ENCODE measurements at regions of chr22 and their contacts with region 1.

Region 1: GRCh38 chr22:37862570-37863325 is 13.5 kb downstream of the EIF3L start:
- DNase-seq: peak; percentile 20
- ATAC-seq: no peak
- H3K4me3 ChIP-seq: no peak overlapping the region
- H3K27ac ChIP-seq: peak overlapping the region; percentile 88
- H3K4me1 ChIP-seq: peaks cover 57% of the 10 kb centered on the region
- H3K27me3 ChIP-seq: no peaks in the 10 kb centered on the region
- CTCF ChIP-seq: no peak
- EP300 ChIP-seq: no peak
- POLR2A ChIP-seq: no peak
- RAD21 ChIP-seq: no peak

Region 2: GRCh38 chr22:37745548-37746365 is 117.0 kb before region 1 on chr22:
- CTCF ChIA-PET with region 1: no interaction called
- POLR2A ChIA-PET with region 1: no interaction called
- in situ Hi-C with region 1: no loop called
- intact Hi-C with region 1: loop called (anchors 10 kb)
- DNase-seq: peak; percentile 80
- ATAC-seq: peak; percentile 75
- H3K4me3 ChIP-seq: peak overlapping the region; percentile 82 to 98 (median 84)
- H3K27ac ChIP-seq: peak overlapping the region; percentile 67
- H3K4me1 ChIP-seq: peaks cover 65% of the 10 kb centered on the region
- H3K27me3 ChIP-seq: no peaks in the 10 kb centered on the region
- CTCF ChIP-seq: no peak
- EP300 ChIP-seq: no peak
- POLR2A ChIP-seq: no peak; a peak in 2 of 4 replicates
- RAD21 ChIP-seq: no peak

Region 3: DNA sequence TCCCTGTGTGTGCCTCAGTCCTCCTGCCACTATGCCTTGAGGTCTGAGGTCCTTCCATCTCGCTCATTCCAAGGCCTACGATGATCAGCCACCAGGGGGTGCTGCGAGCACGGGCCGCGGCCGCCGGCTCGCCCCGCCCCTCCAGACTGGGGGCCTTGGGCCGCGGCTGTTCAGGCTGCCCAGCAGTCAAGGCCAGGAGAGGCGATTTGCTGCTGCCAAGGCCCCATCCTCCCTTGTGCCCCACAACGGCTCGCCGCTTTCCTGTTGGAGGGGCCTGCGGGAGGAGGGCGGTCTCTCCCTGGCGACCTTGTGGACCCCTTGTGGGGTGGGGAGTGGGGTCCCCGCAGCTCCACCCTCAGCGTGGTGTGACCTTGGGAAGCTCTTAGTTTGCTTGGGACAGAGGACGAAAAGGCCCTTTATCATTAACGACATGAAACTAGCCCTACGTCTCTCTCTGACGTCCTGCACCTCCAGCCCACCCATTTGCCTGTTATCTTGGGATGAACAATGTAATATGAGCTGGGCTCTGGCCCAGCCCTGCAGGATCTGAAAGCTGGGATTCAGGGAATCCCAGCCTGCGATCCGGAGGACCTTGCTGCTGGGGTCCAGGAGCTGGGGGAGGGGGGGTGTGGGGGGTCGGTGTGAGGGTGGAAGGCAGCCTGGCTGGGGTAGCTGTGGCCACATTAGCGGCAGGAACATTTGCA is 44.9 kb before region 1 on chr22:
- CTCF ChIA-PET with region 1: interaction called, 23 read pairs
- POLR2A ChIA-PET with region 1: interaction called, 53 read pairs
- in situ Hi-C with region 1: loop called (anchors 5 kb)
- intact Hi-C with region 1: loop called (anchors 1 kb)
- DNase-seq: peak; percentile 86
- ATAC-seq: peak; percentile 70
- H3K4me3 ChIP-seq: peak overlapping the region; percentile 29 to 63 (median 35); a peak in 4 of 6 replicates
- H3K27ac ChIP-seq: peak overlapping the region; percentile 72
- H3K4me1 ChIP-seq: peaks cover 50% of the 10 kb centered on the region
- H3K27me3 ChIP-seq: no peaks in the 10 kb centered on the region
- CTCF ChIP-seq: peak; percentile 100
- EP300 ChIP-seq: peak in 1 of 2 experiments; percentile 23; a peak in 1 of 4 replicates
- POLR2A ChIP-seq: peak in 1 of 2 experiments; percentile 63; a peak in 1 of 4 replicates
- RAD21 ChIP-seq: peak; percentile 98

Region 4: GRCh38 chr22:37843741-37843990 is 19.1 kb before region 1 on chr22:
- CTCF ChIA-PET with region 1: no interaction called
- POLR2A ChIA-PET with region 1: interaction called, 35 read pairs
- in situ Hi-C with region 1: no loop called
- intact Hi-C with region 1: no loop called
- DNase-seq: no peak
- ATAC-seq: peak; percentile 62
- H3K4me3 ChIP-seq: peak overlapping the region; percentile 84 to 91 (median 87)
- H3K27ac ChIP-seq: peak overlapping the region; percentile 85
- H3K4me1 ChIP-seq: peaks cover 41% of the 10 kb centered on the region
- H3K27me3 ChIP-seq: no peaks in the 10 kb centered on the region
- CTCF ChIP-seq: no peak
- EP300 ChIP-seq: no peak
- POLR2A ChIP-seq: no peak; a peak in 1 of 4 replicates
- RAD21 ChIP-seq: no peak

Region 5: DNA sequence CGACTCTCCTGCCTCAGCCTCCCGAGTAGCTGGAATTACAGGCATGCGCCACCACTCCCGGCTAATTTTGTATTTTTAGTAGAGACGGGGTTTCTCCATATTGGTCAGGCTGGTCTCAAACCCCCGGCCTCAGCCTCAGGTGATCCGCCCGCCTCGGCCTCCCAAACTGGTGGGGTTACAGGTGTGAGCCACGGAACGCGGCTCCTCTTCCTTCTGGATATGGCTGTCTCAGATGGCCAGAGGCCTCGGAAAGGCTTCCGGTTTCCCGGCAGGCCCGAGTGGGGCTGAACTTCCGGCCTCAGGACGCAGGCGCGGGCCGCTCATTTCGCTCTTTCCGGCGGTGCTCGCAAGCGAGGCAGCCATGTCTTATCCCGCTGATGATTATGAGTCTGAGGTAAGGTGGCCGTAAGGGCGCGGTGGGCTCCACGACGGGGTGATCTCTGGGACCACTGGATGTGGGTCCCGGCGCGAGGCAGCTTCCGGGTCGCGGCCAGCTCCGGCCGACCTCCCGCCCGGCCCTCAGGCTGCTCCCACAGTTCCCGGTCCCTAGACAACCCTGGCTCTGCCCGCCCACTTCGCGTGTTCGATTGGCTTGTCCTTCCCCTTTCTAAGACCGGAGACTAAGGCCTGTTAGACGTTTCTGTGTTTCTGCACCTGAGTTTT is 13.5 kb before region 1 on chr22 and contains the start of gene EIF3L:
- CTCF ChIA-PET with region 1: no interaction called
- POLR2A ChIA-PET with region 1: interaction called, 35 read pairs
- in situ Hi-C with region 1: no loop called
- intact Hi-C with region 1: no loop called
- DNase-seq: peak; percentile 85
- ATAC-seq: peak; percentile 91
- H3K4me3 ChIP-seq: peak within 1 kb of the TSS; percentile 72 to 93 (median 82)
- H3K27ac ChIP-seq: peak within 1 kb of the TSS; percentile 95
- H3K4me1 ChIP-seq: peaks cover 47% of the 10 kb centered on the region
- H3K27me3 ChIP-seq: no peaks in the 10 kb centered on the region; a peak in 2 of 5 replicates
- CTCF ChIP-seq: 0 out of 2 replicates have a peak, but pooled peaks have one; percentile 8
- EP300 ChIP-seq: no peak
- POLR2A ChIP-seq: peak; percentile 84 to 93
- RAD21 ChIP-seq: no peak; the same call in 1 of the 2 replicates
- total RNA-seq, gene EIF3L: 514 and 695 TPM in 2 replicates

Region 6: GRCh38 chr22:37896181-37896592 is 33.4 kb after region 1 on chr22:
- CTCF ChIA-PET with region 1: no interaction called
- POLR2A ChIA-PET with region 1: interaction called, 37 read pairs
- in situ Hi-C with region 1: no loop called
- intact Hi-C with region 1: no loop called
- DNase-seq: peak; percentile 90
- ATAC-seq: peak; percentile 80
- H3K4me3 ChIP-seq: peak overlapping the region; percentile 19 to 47 (median 28); a peak in 5 of 6 replicates
- H3K27ac ChIP-seq: peak overlapping the region; percentile 80
- H3K4me1 ChIP-seq: peaks cover 82% of the 10 kb centered on the region
- H3K27me3 ChIP-seq: no peaks in the 10 kb centered on the region
- CTCF ChIP-seq: no peak
- EP300 ChIP-seq: 0 out of 4 replicates have a peak, but pooled peaks of 1 of the 2 experiments have one; percentile 16
- POLR2A ChIP-seq: no peak
- RAD21 ChIP-seq: no peak